Activated CD4-positive, alpha-beta memory T cell treated with anti-CD3 and anti-CD28 coated beads, Interleukin-2, amount 10 ng/mL, durations not matched to agents 7 days and 5 days (primary cell): ENCODE measurements at regions of chr4 and their contacts with region 1.

Region 1: GRCh38 chr4:473570-474457 is 25.1 kb downstream of the ZNF721 start:
- DNase-seq: peak; percentile 95
- H3K4me3 Mint-ChIP-seq: peak overlapping the region; percentile 86
- H3K27ac Mint-ChIP-seq: peak overlapping the region; percentile 88
- H3K4me1 Mint-ChIP-seq: peaks cover 44% of the 10 kb centered on the region
- H3K27me3 Mint-ChIP-seq: no peaks in the 10 kb centered on the region

Region 2: DNA sequence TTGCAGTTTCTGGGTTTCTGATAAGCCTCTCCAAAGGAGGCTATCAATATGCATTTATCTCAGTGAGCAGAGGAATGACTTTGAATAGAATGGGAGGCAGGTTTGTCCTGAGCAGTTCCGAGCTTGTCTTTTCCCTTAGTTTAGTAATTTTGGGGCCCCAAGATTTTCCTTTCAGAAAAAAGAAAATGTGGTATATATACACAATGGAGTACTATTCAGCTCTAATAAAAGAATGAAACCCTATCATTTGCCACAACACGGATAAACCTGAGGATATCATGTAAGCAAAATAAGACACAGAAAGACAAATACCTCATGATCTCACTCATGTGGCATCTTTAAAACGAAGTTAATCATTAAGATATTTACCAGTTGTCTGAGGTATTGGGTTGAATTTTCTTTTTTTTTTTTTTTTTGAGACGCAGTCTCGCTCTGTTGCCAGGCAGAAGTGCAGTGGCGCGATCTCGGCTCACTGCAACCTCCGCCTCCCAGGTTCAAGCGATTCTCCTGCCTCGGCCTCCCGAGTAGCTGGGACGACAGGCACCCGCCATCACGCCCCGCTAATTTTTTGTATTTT is 24.6 kb after region 1 on chr4:
- CTCF ChIA-PET with region 1: interaction called, 4 read pairs
- POLR2A ChIA-PET with region 1: interaction called, 67 read pairs
- DNase-seq: no peak
- H3K4me3 Mint-ChIP-seq: peak overlapping the region; percentile 94
- H3K27ac Mint-ChIP-seq: peak overlapping the region; percentile 92
- H3K4me1 Mint-ChIP-seq: peaks cover 56% of the 10 kb centered on the region
- H3K27me3 Mint-ChIP-seq: no peaks in the 10 kb centered on the region

Region 3: DNA sequence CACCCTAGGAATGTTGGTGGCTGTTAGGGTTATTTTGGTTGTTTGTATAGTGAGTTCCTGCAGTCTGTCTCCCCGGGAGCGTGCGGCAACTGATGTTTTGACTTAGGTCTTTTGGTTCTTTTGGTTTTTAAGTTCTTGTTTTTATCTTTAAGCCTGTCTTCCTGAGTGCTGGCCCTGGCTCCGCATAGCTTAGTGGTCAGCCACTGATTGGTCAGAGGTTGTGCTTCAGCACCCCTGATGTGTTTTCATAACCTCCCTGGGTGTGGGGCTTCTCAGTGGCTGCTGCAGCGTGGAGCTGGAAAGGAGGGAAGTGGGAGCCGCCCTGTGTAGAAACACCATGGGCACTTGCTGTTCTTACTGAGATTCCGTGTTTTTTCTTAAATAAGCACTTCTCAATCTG is 30.3 kb after region 1 on chr4:
- CTCF ChIA-PET with region 1: no interaction called
- POLR2A ChIA-PET with region 1: interaction called, 67 read pairs
- DNase-seq: no peak
- H3K4me3 Mint-ChIP-seq: no peak overlapping the region
- H3K27ac Mint-ChIP-seq: no peak overlapping the region
- H3K4me1 Mint-ChIP-seq: peaks cover 51% of the 10 kb centered on the region
- H3K27me3 Mint-ChIP-seq: no peaks in the 10 kb centered on the region